ENCODE measurements at regions of chr1 and their contacts with region 1.

Region 1: DNA sequence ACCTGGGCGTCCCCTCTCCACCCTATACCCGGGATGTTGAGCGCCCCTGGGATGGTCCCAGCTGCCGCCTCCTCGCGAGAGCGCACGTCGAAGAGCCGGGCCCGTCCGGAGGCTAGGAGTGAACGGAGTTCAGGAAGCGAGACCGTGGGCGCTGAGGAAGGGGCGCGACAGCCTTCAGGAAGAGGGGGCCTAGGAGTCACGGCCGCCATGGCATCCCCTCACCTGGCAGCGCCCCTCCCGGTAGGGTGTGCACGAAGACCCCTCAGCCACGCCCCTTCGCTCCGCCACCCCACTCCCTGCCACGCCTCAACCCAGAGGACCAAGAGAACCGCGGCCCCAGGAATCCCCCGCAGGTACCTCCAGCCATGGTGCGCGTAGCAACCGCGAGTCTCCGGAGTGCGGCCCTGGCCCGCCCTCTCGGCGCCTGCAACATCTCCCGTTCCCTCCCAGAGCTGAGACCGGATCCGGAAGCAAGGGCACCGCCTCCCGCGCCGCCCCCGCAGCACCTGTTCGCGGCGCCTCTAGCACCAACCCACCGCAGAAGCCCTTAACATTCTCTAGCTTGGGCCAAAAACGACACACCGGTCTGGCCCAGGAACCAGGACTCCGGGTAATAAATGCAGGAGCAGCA is at the start of gene TSTD1:
- DNase-seq: no peak
- ATAC-seq: peak; percentile 83
- H3K4me3 ChIP-seq: peak within 1 kb of the TSS; percentile 76 to 88
- H3K27ac ChIP-seq: peak within 1 kb of the TSS; percentile 88
- H3K4me1 ChIP-seq: peaks cover 14 to 32% of the 10 kb centered on the region in 2 experiments
- H3K27me3 ChIP-seq: no peaks in the 10 kb centered on the region
- CTCF ChIP-seq: no peak
- POLR2A ChIP-seq: peak; percentile 57
- RAD21 ChIP-seq: no peak
- total RNA-seq, gene TSTD1: 116 TPM

Region 2: DNA sequence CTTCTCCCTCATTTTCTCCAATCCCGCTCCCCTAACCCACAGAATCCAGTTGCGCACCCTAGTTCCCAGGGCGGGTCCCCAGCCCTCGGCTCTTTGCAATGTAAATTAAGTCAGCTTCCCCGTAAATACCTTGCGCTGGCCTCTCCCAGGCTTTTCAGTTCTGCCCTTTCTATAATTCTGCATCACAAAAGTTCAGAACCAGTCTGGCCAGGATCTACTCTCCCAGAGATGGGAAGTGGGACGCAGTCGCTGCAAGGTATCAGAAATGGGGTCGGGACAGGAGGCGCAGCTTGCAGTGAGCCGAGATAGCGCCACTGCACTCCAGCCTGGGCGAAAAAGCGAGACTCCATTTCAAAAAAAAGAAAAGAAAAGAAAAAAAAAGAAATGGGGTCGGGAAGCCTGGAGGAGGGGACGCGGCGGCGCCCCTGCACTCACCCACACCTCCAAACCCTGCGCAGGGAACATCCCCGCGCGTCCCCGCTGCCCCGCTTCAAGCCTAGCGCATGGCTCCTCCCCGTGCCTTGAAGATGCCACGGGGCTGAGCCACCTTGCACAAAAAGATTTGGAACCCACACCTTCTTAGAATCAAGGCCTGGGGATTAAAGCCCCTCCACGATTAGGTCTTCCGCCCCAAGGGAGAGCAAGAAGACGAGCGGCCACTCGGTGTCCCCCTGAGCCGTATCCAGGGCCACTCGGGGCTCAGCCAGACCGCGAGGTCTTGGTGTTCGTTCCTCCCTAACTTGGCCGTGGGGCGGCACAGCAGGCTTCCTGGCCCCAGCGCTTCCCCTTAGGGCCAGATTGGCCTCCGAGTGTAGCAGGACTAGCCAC is 56.8 kb before region 1 on chr1:
- CTCF ChIA-PET with region 1: no interaction called
- POLR2A ChIA-PET with region 1: no interaction called
- RAD21 ChIA-PET with region 1: no interaction called
- intact Hi-C with region 1: no loop called
- DNase-seq: no peak
- ATAC-seq: no peak
- H3K4me3 ChIP-seq: no peak overlapping the region
- H3K27ac ChIP-seq: no peak overlapping the region
- H3K4me1 ChIP-seq: peaks cover 3 to 5% of the 10 kb centered on the region in 2 experiments; a peak in 2 of 4 replicates
- H3K27me3 ChIP-seq: no peaks in the 10 kb centered on the region
- CTCF ChIP-seq: no peak
- POLR2A ChIP-seq: no peak
- RAD21 ChIP-seq: no peak

Region 3: GRCh38 chr1:160997323-160998038 is 41.2 kb before region 1 on chr1:
- CTCF ChIA-PET with region 1: interaction called, 4 read pairs
- POLR2A ChIA-PET with region 1: interaction called, 3 read pairs
- RAD21 ChIA-PET with region 1: no interaction called
- intact Hi-C with region 1: loop called (anchors 2 kb)
- DNase-seq: peak; percentile 51
- ATAC-seq: peak; percentile 71
- H3K4me3 ChIP-seq: no peak overlapping the region
- H3K27ac ChIP-seq: peak overlapping the region; percentile 61
- H3K4me1 ChIP-seq: peaks cover 30 to 60% of the 10 kb centered on the region in 2 experiments
- H3K27me3 ChIP-seq: no peaks in the 10 kb centered on the region
- CTCF ChIP-seq: peak; percentile 58 to 75 (median 73); a peak in 5 of 6 replicates
- POLR2A ChIP-seq: no peak
- RAD21 ChIP-seq: peak; percentile 75

Region 4: GRCh38 chr1:161749509-161750407 is 711.1 kb after region 1 on chr1 and contains the start of gene DUSP12:
- CTCF ChIA-PET with region 1: no interaction called
- POLR2A ChIA-PET with region 1: no interaction called
- RAD21 ChIA-PET with region 1: no interaction called
- intact Hi-C with region 1: no loop called
- DNase-seq: peak; percentile 90
- ATAC-seq: peak; percentile 93
- H3K4me3 ChIP-seq: peak within 1 kb of the TSS; percentile 90 to 92
- H3K27ac ChIP-seq: peak within 1 kb of the TSS; percentile 78
- H3K4me1 ChIP-seq: peaks cover 8 to 16% of the 10 kb centered on the region in 2 experiments; a peak in 3 of 4 replicates
- H3K27me3 ChIP-seq: no peaks in the 10 kb centered on the region
- CTCF ChIP-seq: 0 out of 6 replicates have a peak, but pooled peaks of 2 of the 3 experiments have one; percentile 1 to 10
- POLR2A ChIP-seq: peak; percentile 80
- RAD21 ChIP-seq: no peak
- total RNA-seq, gene DUSP12: 31.6 TPM